ENCODE measurements at regions of chr11 and their contacts with region 1.

Region 1: GRCh38 chr11:47355283-47356128 is 3.0 kb upstream of the MYBPC3 start:
- DNase-seq: peak; percentile 86
- ATAC-seq: peak; percentile 87
- H3K4me3 ChIP-seq: peak overlapping the region; percentile 54 to 72 (median 66)
- H3K27ac ChIP-seq: no peak overlapping the region
- H3K4me1 ChIP-seq: peaks cover 64% of the 10 kb centered on the region
- H3K27me3 ChIP-seq: peaks cover 6 to 31% of the 10 kb centered on the region in 2 experiments; a peak in 3 of 5 replicates
- CTCF ChIP-seq: peak; percentile 100
- EP300 ChIP-seq: no peak
- POLR2A ChIP-seq: no peak
- RAD21 ChIP-seq: peak; percentile 97

Region 2: DNA sequence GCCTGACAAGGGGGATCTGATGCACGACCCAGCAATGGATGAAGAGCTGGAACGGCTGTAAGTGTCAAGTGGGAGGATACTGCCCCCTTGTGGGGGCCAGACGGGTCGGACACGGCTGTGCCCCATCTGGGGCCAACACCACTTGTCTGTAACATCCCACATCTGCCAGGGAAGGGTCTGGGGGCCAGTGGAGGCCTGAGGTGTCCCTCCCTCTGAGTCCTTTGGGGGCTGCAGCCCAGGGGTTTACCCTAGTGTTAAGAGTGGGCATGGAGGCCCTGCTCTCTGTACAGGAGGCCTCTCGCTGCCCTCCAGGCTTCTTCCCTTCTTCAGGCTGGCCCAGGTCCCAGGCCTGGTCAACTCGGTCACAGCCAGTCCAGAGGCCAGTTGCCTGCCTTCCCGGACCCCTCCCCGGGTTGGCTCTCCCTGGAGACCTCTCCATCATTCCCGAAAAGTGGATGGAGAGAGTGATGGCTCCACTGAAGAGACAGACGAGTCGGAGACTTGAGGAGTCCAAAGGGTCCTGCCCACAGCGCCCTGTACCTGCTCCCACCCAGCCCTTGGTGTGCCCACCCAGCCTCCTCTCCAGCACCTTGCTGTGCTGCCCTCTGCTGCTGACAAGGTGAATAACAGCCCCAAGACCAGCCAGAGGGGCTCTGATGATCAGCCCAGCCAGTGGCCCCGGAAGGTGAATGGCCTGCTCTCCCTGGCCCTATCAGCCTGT is 194.2 kb before region 1 on chr11:
- CTCF ChIA-PET with region 1: interaction called, 10 read pairs
- POLR2A ChIA-PET with region 1: no interaction called
- in situ Hi-C with region 1: no loop called
- intact Hi-C with region 1: no loop called
- DNase-seq: peak; percentile 63
- ATAC-seq: peak; percentile 81
- H3K4me3 ChIP-seq: no peak overlapping the region
- H3K27ac ChIP-seq: no peak overlapping the region
- H3K4me1 ChIP-seq: peaks cover 21% of the 10 kb centered on the region
- H3K27me3 ChIP-seq: no peaks in the 10 kb centered on the region
- CTCF ChIP-seq: peak; percentile 81
- EP300 ChIP-seq: no peak
- POLR2A ChIP-seq: peak in 1 of 2 experiments; percentile 47; a peak in 2 of 4 replicates
- RAD21 ChIP-seq: peak; percentile 72

Region 3: GRCh38 chr11:47176328-47177228 is 178.9 kb before region 1 on chr11 and contains the start of gene ARFGAP2:
- CTCF ChIA-PET with region 1: interaction called, 13 read pairs
- POLR2A ChIA-PET with region 1: interaction called, 3 read pairs
- in situ Hi-C with region 1: loop called (anchors 5 kb)
- intact Hi-C with region 1: loop called (anchors 1 kb)
- DNase-seq: peak; percentile 84
- ATAC-seq: peak; percentile 90
- H3K4me3 ChIP-seq: peak within 1 kb of the TSS; percentile 91 to 98 (median 93)
- H3K27ac ChIP-seq: peak within 1 kb of the TSS; percentile 84
- H3K4me1 ChIP-seq: peaks cover 62% of the 10 kb centered on the region
- H3K27me3 ChIP-seq: no peaks in the 10 kb centered on the region; a peak in 1 of 5 replicates
- CTCF ChIP-seq: no peak
- EP300 ChIP-seq: no peak
- POLR2A ChIP-seq: peak in 1 of 2 experiments; percentile 54; a peak in 1 of 4 replicates
- RAD21 ChIP-seq: no peak
- total RNA-seq, gene ARFGAP2: 67.9 and 75.3 TPM in 2 replicates

Region 4: GRCh38 chr11:47269002-47269828 is 86.3 kb before region 1 on chr11:
- CTCF ChIA-PET with region 1: no interaction called
- POLR2A ChIA-PET with region 1: no interaction called
- in situ Hi-C with region 1: no loop called
- intact Hi-C with region 1: loop called (anchors 2 kb)
- DNase-seq: peak; percentile 94
- ATAC-seq: peak; percentile 76
- H3K4me3 ChIP-seq: peak overlapping the region; percentile 70 to 92 (median 82)
- H3K27ac ChIP-seq: peak overlapping the region; percentile 88
- H3K4me1 ChIP-seq: peaks cover 57% of the 10 kb centered on the region
- H3K27me3 ChIP-seq: no peaks in the 10 kb centered on the region
- CTCF ChIP-seq: peak; percentile 15
- EP300 ChIP-seq: peak in 1 of 2 experiments; percentile 19; a peak in 1 of 4 replicates
- POLR2A ChIP-seq: peak in 1 of 2 experiments; percentile 17; a peak in 1 of 4 replicates
- RAD21 ChIP-seq: no peak

Region 5: DNA sequence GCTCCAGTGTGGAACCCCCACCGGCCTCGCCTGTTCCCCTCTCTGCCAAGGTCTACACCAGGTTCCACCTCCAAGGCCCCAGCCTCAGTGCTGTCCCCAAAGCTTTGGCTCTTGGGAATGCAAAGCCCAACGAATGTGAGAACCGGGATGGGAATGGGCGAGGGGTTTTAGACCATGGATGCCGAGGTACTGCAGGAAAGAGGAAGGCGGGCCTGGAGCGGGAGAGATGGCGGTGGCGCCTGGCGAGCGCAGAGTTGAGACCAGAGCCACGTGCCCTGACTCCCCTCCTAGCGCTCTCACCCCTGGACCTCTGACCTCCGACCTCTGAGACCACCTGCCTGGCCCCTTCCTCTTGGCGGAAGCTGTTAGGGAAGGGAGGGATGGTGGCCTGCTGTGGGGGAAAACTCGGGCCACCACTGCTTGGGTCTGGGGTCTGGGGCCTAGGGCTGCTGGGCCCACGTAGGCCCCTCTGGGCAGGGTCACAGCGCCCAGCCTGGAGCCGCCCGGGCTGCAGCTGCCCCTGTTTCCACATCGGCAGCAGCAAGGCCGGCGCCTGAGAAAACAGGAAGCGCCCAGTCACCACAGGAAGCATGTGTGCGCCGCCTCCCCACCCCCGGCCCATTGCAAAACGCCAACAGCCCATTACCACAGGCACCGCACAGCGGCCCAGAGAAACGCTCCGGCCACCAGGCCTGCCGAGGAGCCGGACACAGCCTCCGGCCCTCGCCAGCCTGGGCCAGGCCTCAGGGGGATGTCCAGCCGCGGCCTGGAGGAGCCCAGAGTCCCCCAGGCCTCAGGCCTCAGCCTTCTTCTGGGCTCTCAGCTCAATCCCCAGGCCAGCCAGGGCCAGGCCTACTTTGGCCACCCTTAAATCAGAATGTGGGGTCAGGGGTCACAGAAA is 39.1 kb after region 1 on chr11:
- CTCF ChIA-PET with region 1: no interaction called
- POLR2A ChIA-PET with region 1: no interaction called
- in situ Hi-C with region 1: no loop called
- intact Hi-C with region 1: no loop called
- DNase-seq: peak; percentile 38
- ATAC-seq: peak; percentile 16
- H3K4me3 ChIP-seq: no peak overlapping the region
- H3K27ac ChIP-seq: no peak overlapping the region
- H3K4me1 ChIP-seq: peaks cover 58% of the 10 kb centered on the region
- H3K27me3 ChIP-seq: peaks cover 0 to 16% of the 10 kb centered on the region in 2 experiments; a peak in 2 of 5 replicates
- CTCF ChIP-seq: no peak
- EP300 ChIP-seq: no peak
- POLR2A ChIP-seq: no peak
- RAD21 ChIP-seq: no peak

Region 6: GRCh38 chr11:47611348-47611794 is 255.9 kb after region 1 on chr11:
- CTCF ChIA-PET with region 1: no interaction called
- POLR2A ChIA-PET with region 1: no interaction called
- in situ Hi-C with region 1: no loop called
- intact Hi-C with region 1: loop called (anchors 5 kb)
- DNase-seq: no peak
- ATAC-seq: peak; percentile 19
- H3K4me3 ChIP-seq: no peak overlapping the region
- H3K27ac ChIP-seq: no peak overlapping the region
- H3K4me1 ChIP-seq: no peaks in the 10 kb centered on the region
- H3K27me3 ChIP-seq: no peaks in the 10 kb centered on the region
- CTCF ChIP-seq: no peak
- EP300 ChIP-seq: no peak
- POLR2A ChIP-seq: no peak
- RAD21 ChIP-seq: no peak

Measured in HepG2 (cell line).